ENCODE measurements at regions of chr3 and their contacts with region 1.

Region 1: GRCh38 chr3:185781759-185782158 is 43.1 kb downstream of the IGF2BP2 start:
- DNase-seq: peak; percentile 58
- H3K27ac ChIP-seq: no peak overlapping the region
- CTCF ChIP-seq: no peak

Region 2: GRCh38 chr3:185764163-185764979 is 17.4 kb before region 1 on chr3:
- CTCF ChIA-PET with region 1: interaction called, 13 read pairs
- POLR2A ChIA-PET with region 1: no interaction called
- DNase-seq: no peak
- H3K27ac ChIP-seq: no peak overlapping the region
- CTCF ChIP-seq: no peak